Naive thymus-derived CD4-positive, alpha-beta T cell (primary cell): ENCODE measurements at regions of chr6 and their contacts with region 1.

Region 1: DNA sequence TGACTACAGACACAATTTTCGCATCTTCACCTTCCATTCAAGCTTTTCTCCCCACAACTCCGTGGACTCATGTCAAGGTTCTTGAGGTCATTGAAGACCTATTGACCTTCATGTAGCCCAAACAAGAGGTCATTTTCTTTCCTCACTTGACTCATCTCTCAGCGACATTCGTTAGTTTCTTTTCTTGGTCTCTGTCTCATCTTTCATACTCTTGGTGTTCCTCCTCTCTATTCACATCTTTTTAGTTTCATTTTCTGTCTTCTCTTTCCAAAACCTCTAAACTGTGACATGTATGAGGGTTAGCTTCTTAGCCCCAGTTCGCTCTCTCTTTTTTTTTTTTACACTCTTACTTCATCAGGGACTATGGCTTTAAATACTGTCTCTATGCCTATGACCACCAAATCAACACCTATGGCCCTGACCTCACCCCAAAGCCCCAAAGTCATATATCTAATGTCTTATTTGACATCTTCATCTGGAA is 128.6 kb upstream of the BACH2 start:
- DNase-seq: peak in 6 of 9 donors; percentile 19 to 47 (median 42)
- ATAC-seq: peak; percentile 86
- H3K4me3 ChIP-seq: peak overlapping the region; percentile 32
- H3K4me3 Mint-ChIP-seq: peak overlapping the region; percentile 63 to 85 (median 78)
- H3K27ac ChIP-seq: peak overlapping the region; percentile 53
- H3K27ac Mint-ChIP-seq: peak overlapping the region; percentile 87 to 97 (median 92)
- H3K4me1 ChIP-seq: peaks cover 0 to 10% of the 10 kb centered on the region in 2 donors
- H3K4me1 Mint-ChIP-seq: peaks cover 12 to 25% (median 18%) of the 10 kb centered on the region in 7 donors
- H3K27me3 ChIP-seq: no peaks in the 10 kb centered on the region
- H3K27me3 Mint-ChIP-seq: no peaks in the 10 kb centered on the region

Region 2: DNA sequence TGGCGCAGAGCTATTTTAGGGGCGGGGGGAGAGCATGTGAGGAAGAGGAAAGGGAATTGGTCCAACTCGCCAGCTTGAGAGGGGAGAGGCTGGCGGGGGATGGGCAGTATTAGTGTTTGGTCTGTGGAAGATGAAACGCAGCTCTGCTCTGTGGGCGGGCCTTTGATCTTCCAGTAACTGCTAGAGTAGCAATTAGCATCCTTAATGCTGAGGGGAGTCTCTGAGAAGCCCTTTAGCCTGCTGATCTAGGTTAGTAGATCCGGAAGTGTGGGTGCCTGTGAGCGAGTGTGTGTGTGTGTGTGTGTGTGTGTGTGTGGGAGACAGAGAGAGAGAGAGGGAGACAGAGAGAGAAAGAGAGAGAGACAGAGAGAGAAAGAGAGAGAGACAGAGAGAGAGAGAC is 11.3 kb before region 1 on chr6:
- CTCF ChIA-PET with region 1: interaction called, 7 read pairs
- POLR2A ChIA-PET with region 1: interaction called, 29 read pairs
- intact Hi-C with region 1: loop called (anchors 1 kb)
- DNase-seq: peak; percentile 29 to 83 (median 75)
- ATAC-seq: peak; percentile 95
- H3K4me3 ChIP-seq: peak overlapping the region; percentile 40
- H3K4me3 Mint-ChIP-seq: peak overlapping the region; percentile 70 to 87 (median 75)
- H3K27ac ChIP-seq: no peak overlapping the region
- H3K27ac Mint-ChIP-seq: peak overlapping the region; percentile 63 to 96 (median 91)
- H3K4me1 ChIP-seq: peaks cover 16 to 30% of the 10 kb centered on the region in 2 donors
- H3K4me1 Mint-ChIP-seq: peaks cover 15 to 68% (median 26%) of the 10 kb centered on the region in 7 donors
- H3K27me3 ChIP-seq: no peaks in the 10 kb centered on the region
- H3K27me3 Mint-ChIP-seq: peaks cover 0 to 2% (median 0%) of the 10 kb centered on the region in 5 donors

Region 3: GRCh38 chr6:90444160-90444714 is 19.0 kb after region 1 on chr6:
- CTCF ChIA-PET with region 1: no interaction called
- POLR2A ChIA-PET with region 1: interaction called, 3 read pairs
- intact Hi-C with region 1: loop called (anchors 2 kb)
- DNase-seq: peak in 1 of 9 donors; percentile 9
- ATAC-seq: no peak
- H3K4me3 ChIP-seq: no peak overlapping the region
- H3K4me3 Mint-ChIP-seq: peak overlapping the region in 8 of 10 donors; percentile 28 to 72 (median 50)
- H3K27ac ChIP-seq: no peak overlapping the region
- H3K27ac Mint-ChIP-seq: peak overlapping the region in 5 of 9 donors; percentile 25 to 78 (median 62)
- H3K4me1 ChIP-seq: no peaks in the 10 kb centered on the region
- H3K4me1 Mint-ChIP-seq: peaks cover 8 to 49% (median 19%) of the 10 kb centered on the region in 7 donors
- H3K27me3 ChIP-seq: no peaks in the 10 kb centered on the region
- H3K27me3 Mint-ChIP-seq: no peaks in the 10 kb centered on the region

Region 4: DNA sequence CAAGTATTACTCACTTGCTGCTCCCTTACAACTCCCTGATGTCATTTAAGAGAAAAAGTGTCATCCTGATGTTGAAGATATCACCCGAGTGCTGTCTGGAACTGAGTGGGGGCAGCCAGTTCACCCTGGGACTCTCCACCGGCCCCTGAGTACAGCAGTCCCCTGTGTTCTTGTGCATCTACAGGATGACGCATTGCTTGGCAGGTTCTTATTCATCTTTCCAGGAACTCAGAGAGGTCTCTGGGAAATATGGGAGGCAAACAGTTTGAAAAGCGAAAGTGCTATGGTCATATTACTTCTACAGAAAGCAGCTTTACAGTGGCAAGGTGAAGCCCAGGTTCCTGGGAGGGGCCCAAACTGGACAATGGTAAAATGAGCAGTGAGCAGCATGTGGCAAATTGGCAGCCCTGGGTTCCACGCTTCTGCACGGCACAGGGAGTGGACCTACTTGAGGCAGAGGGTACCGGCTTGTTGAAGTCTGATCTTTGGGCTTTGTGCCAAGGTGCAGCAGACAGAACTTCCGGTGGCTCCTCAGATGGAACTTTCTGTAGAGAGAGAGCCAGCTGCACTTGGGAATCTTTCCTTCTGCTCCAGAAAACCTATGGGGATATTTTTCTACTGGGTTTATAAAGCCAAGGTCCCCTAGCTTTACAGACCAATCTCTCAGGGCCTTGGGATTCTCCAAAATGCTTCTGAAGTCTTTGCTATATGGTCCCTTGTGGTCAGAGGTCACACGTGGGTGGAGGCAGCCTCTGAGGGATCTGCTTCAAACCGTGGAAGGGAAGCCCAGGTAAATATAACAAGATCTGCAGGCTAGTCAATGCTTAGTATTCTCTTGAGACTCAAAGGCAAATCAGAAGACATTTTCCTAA is 33.4 kb after region 1 on chr6:
- CTCF ChIA-PET with region 1: interaction called, 4 read pairs
- POLR2A ChIA-PET with region 1: interaction called, 10 read pairs
- intact Hi-C with region 1: loop called in 1 of 2 experiments (anchors 1 kb)
- DNase-seq: peak in 6 of 9 donors; percentile 37 to 74 (median 48)
- ATAC-seq: peak; percentile 70
- H3K4me3 ChIP-seq: peak overlapping the region; percentile 26
- H3K4me3 Mint-ChIP-seq: peak overlapping the region in 9 of 10 donors; percentile 45 to 82 (median 74)
- H3K27ac ChIP-seq: no peak overlapping the region
- H3K27ac Mint-ChIP-seq: peak overlapping the region in 8 of 9 donors; percentile 21 to 91 (median 80)
- H3K4me1 ChIP-seq: peaks cover 25 to 30% of the 10 kb centered on the region in 2 donors
- H3K4me1 Mint-ChIP-seq: peaks cover 23 to 65% (median 47%) of the 10 kb centered on the region in 7 donors
- H3K27me3 ChIP-seq: no peaks in the 10 kb centered on the region
- H3K27me3 Mint-ChIP-seq: no peaks in the 10 kb centered on the region